Dendritic cell treated with granulocyte-macrophage colony-stimulating factor and Interleukin-4, amounts not matched to agents 40 ng/mL and 50 ng/mL, for 4 days (primary cell): ENCODE measurements at regions of chr3 and their contacts with region 1.

Region 1: DNA sequence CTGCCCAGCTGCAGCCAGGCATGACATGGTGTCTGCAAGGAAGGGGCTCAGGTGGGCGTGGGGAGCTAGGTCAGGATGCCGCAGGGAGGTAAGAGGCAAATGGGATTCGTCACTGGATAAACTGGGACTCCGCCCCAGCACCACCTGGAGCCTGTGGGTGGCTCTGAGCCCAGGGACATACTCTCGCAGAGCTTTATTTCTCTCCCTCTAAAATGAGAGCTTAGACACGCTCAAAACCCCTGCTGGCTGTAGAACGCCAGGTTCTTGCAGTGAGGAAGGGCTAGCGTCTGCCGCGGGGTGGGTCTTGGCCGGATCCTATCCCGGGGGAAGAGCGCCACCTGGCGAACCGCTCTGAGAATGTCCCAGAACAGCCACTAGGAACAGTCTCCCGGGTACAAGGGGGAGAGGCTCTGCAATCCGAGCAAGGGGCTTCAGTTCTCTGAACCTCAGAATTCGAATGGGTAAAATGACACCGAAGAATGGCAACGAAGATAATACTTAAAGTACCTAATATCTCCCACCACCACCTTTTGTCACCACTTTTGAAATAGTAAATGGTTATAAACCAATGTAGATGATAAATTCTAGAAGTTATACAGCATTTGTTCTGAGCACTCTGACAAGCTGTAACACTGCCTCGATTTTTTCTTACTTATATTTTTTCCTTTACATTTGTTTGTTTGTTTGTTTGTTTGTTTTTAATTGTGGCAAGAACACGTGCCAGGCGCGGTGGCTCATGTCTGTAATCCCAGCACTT is 53.2 kb upstream of the SRGAP3 start:
- H3K4me3 Mint-ChIP-seq: no peak overlapping the region
- H3K27ac Mint-ChIP-seq: no peak overlapping the region
- H3K4me1 Mint-ChIP-seq: peaks cover 7% of the 10 kb centered on the region
- H3K27me3 Mint-ChIP-seq: peaks cover 5% of the 10 kb centered on the region

Region 2: DNA sequence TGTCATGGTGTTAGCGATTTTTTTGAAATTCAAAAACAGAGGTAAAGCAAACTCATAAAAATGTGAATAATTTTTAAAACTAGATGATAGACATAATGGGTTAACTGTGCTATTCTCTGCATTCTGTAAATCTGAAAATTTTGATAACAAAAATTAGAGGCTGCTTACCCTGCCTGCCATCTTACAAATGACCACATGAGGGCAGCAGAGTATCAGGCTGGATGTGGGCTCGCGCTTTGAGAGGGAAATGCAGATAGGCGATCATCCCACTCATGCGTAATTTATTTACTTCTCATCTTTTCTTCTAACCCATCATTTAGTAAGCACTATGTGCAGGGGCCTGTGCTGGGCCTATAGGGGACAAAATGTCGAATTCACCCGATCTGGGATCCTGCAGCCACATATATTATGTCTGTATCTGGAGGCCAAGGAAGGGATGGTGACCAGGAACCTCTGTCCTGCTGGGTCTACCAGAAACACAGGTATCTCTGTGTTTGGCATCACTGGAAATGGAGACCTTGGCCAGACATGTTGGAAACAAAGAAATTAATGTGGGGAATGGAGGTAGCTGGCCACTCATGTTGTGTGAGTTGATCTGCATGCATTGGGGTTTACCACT is 331.5 kb before region 1 on chr3:
- intact Hi-C with region 1: loop called (anchors 1 kb)
- H3K4me3 Mint-ChIP-seq: no peak overlapping the region
- H3K27ac Mint-ChIP-seq: no peak overlapping the region
- H3K4me1 Mint-ChIP-seq: no peaks in the 10 kb centered on the region
- H3K27me3 Mint-ChIP-seq: peaks cover 6% of the 10 kb centered on the region

Region 3: DNA sequence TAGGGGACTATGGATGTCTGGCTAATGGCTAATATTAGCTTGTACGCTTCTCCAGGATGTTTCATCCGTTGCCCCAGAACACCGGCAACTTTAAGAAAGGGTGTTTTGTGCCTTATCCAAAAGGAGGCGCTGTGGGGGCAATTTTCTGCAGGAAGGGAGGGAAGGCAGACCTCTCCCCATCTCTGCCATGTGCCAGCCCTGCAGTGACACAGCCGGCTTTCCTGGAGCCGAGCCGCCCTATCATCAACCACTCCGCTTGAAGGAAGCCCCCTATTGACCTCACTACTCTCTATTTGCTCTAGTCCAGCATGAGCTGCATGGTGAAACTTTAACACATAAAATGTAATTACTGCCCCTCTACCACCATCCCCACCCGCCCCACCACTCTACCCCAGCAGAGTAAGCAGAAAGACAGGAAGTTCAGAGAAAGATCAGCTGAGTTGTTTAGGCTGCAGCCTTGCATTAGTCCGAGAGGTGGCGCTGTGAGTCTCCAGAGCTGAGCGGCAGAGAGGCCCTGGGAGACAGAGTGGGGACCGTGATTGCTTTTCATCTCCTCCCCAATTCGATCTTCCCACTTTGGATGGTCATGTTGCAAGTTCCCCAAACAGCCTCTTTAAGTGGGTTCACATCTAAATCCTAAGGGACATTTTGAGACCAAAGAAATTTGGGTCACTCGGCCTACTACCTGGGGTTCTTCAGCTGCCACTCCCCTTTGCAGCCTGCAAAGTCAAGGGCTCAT is 314.8 kb before region 1 on chr3:
- intact Hi-C with region 1: loop called (anchors 1 kb)
- H3K4me3 Mint-ChIP-seq: peak overlapping the region; percentile 39
- H3K27ac Mint-ChIP-seq: no peak overlapping the region
- H3K4me1 Mint-ChIP-seq: peaks cover 14% of the 10 kb centered on the region
- H3K27me3 Mint-ChIP-seq: no peaks in the 10 kb centered on the region

Region 4: GRCh38 chr3:9067352-9067975 is 235.1 kb before region 1 on chr3:
- intact Hi-C with region 1: loop called (anchors 2 kb)
- H3K4me3 Mint-ChIP-seq: no peak overlapping the region
- H3K27ac Mint-ChIP-seq: no peak overlapping the region
- H3K4me1 Mint-ChIP-seq: peaks cover 14% of the 10 kb centered on the region
- H3K27me3 Mint-ChIP-seq: no peaks in the 10 kb centered on the region